PC-9 (cell line): ENCODE measurements at regions of chr13 and their contacts with region 1.

Region 1: GRCh38 chr13:52450012-52450792 is at the start of gene VPS36:
- DNase-seq: peak; percentile 76 to 96
- H3K4me3 ChIP-seq: peak within 1 kb of the TSS; percentile 65
- H3K27ac ChIP-seq: peak within 1 kb of the TSS; percentile 58
- H3K4me1 ChIP-seq: peaks cover 52% of the 10 kb centered on the region
- H3K27me3 ChIP-seq: no peaks in the 10 kb centered on the region
- CTCF ChIP-seq: peak; percentile 95
- total RNA-seq, gene VPS36: 28.1 and 31.6 TPM in 2 replicates

Region 2: GRCh38 chr13:51729866-51730546 is 720.2 kb before region 1 on chr13:
- CTCF ChIA-PET with region 1: no interaction called
- POLR2A ChIA-PET with region 1: no interaction called
- intact Hi-C with region 1: no loop called
- DNase-seq: peak in 1 of 2 experiments; percentile 49
- H3K4me3 ChIP-seq: no peak overlapping the region
- H3K27ac ChIP-seq: no peak overlapping the region
- H3K4me1 ChIP-seq: peaks cover 15% of the 10 kb centered on the region
- H3K27me3 ChIP-seq: no peaks in the 10 kb centered on the region
- CTCF ChIP-seq: no peak

Region 3: GRCh38 chr13:51814825-51815650 is 635.2 kb before region 1 on chr13:
- CTCF ChIA-PET with region 1: interaction called, 5 read pairs
- POLR2A ChIA-PET with region 1: no interaction called
- intact Hi-C with region 1: loop called (anchors 5 kb)
- DNase-seq: peak; percentile 55 to 66
- H3K4me3 ChIP-seq: peak overlapping the region; percentile 7; the same call in 1 of the 2 replicates
- H3K27ac ChIP-seq: no peak overlapping the region
- H3K4me1 ChIP-seq: peaks cover 10% of the 10 kb centered on the region; the same call in 1 of the 2 replicates
- H3K27me3 ChIP-seq: peaks cover 36% of the 10 kb centered on the region; the same call in 1 of the 2 replicates
- CTCF ChIP-seq: peak; percentile 85

Region 4: GRCh38 chr13:51895906-51896888 is 554.0 kb before region 1 on chr13:
- CTCF ChIA-PET with region 1: no interaction called
- POLR2A ChIA-PET with region 1: no interaction called
- intact Hi-C with region 1: loop called (anchors 5 kb)
- DNase-seq: peak; percentile 24 to 39
- H3K4me3 ChIP-seq: no peak overlapping the region
- H3K27ac ChIP-seq: no peak overlapping the region
- H3K4me1 ChIP-seq: no peaks in the 10 kb centered on the region
- H3K27me3 ChIP-seq: peaks cover 36% of the 10 kb centered on the region
- CTCF ChIP-seq: peak; percentile 73

Region 5: DNA sequence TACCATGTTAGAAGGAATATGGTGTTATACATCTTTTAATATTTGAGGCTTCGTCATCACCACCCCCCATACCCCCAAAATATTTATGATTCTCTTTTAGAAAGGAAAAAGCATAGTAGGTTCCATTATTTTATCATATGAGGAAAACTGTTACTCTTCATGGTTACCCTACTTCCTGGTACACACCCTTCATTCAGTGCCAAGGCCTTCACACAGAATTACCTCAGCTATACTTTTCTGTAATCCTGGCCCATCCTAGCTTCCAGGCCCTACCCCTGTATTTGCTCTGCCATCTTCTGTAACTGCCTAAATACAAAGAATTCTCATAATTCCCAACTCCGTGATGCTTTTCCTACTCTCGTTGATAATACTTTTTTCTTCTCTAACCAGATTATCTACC is 430.0 kb before region 1 on chr13:
- CTCF ChIA-PET with region 1: no interaction called
- POLR2A ChIA-PET with region 1: no interaction called
- intact Hi-C with region 1: no loop called
- DNase-seq: no peak
- H3K4me3 ChIP-seq: no peak overlapping the region
- H3K27ac ChIP-seq: no peak overlapping the region
- H3K4me1 ChIP-seq: no peaks in the 10 kb centered on the region
- H3K27me3 ChIP-seq: no peaks in the 10 kb centered on the region
- CTCF ChIP-seq: no peak

Region 6: GRCh38 chr13:52070929-52071523 is 379.2 kb before region 1 on chr13:
- CTCF ChIA-PET with region 1: no interaction called
- POLR2A ChIA-PET with region 1: no interaction called
- intact Hi-C with region 1: loop called (anchors 2 kb)
- DNase-seq: no peak
- H3K4me3 ChIP-seq: no peak overlapping the region
- H3K27ac ChIP-seq: no peak overlapping the region
- H3K4me1 ChIP-seq: 0 out of 2 replicates have a peak, but pooled peaks cover 4% of the 10 kb centered on the region
- H3K27me3 ChIP-seq: no peaks in the 10 kb centered on the region
- CTCF ChIP-seq: peak; percentile 46; the same call in 1 of the 2 replicates

Region 7: DNA sequence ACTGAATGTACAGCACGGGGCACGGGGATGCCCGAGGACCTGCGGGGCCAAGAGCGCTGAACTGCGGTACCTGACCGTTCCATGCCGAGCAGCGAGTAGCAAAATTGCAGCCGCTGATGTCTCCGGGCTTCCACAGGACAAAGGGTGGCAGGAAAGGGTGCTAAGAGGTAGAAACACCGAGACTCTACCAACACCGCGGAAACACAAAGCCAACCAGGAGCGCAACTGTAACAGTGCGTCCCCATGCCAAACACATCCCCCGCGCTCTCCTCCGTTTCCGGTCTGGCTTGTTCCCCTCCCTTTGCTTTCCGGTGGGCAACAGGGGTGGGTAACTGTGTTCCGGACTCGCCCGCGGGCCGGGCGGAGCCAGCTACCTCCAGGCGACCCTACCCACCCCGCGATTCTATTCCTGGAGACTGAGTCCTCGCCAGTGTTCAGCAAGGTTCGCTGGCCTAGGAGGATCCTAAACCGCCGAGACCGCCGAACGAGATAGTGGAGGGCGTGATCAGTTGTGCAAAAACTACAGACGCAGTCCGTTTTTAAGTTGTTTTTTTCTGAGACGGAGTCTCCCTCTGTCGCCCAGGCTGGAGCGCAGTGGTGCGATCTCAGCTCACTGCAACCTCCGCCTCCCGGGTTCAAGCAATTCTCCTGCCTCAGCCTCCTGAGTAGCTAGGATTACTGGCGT is 255.9 kb before region 1 on chr13:
- CTCF ChIA-PET with region 1: interaction called, 4 read pairs
- POLR2A ChIA-PET with region 1: no interaction called
- intact Hi-C with region 1: loop called (anchors 2 kb)
- DNase-seq: peak; percentile 68 to 84
- H3K4me3 ChIP-seq: peak overlapping the region; percentile 92
- H3K27ac ChIP-seq: peak overlapping the region; percentile 35
- H3K4me1 ChIP-seq: peaks cover 13% of the 10 kb centered on the region
- H3K27me3 ChIP-seq: no peaks in the 10 kb centered on the region
- CTCF ChIP-seq: no peak

Region 8: GRCh38 chr13:52383366-52383765 is 66.8 kb before region 1 on chr13:
- CTCF ChIA-PET with region 1: no interaction called
- POLR2A ChIA-PET with region 1: no interaction called
- intact Hi-C with region 1: no loop called
- DNase-seq: no peak
- H3K4me3 ChIP-seq: no peak overlapping the region
- H3K27ac ChIP-seq: no peak overlapping the region
- H3K4me1 ChIP-seq: peaks cover 9% of the 10 kb centered on the region; the same call in 1 of the 2 replicates
- H3K27me3 ChIP-seq: no peaks in the 10 kb centered on the region
- CTCF ChIP-seq: no peak

Region 9: DNA sequence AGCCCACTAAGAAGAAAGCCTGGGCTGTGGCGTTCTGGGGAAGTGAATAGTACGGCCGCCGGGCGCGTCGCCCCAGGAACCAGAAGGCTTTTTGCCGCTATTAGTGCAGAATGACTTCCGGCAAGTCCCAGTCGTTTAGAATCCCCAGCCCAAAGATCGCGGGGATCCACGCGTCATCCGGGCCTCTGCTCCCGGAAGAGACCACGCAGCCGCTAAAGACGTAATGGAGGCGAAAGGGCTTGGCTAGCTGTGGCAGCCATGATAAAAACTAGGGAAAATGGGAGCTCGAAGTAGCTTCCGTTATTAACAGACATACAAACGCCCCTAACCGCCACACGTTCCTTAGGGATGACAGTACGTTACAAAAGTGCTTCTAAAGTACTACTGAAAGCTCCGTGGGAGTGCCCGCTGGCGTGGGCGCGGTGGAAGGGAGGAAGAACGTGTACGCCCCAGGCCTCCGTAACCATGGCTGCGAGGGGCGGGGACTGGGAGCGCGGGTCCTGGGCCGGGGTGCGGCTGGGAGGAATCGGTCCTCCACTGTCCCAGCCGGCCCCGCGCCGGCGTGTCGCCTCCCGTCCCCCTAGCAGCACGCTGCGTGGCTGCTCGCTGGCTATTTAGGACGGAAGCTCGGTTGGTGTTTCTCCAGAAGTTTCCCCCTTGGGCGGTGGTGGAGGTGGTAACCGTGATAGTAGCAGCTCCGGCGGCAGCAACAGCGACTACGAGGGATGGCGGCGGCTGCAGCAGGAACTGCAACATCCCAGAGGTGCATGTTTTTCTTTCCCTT is 202.2 kb after region 1 on chr13 and contains the start of gene SUGT1:
- CTCF ChIA-PET with region 1: no interaction called
- POLR2A ChIA-PET with region 1: no interaction called
- intact Hi-C with region 1: loop called (anchors 10 kb)
- DNase-seq: peak; percentile 94 to 97
- H3K4me3 ChIP-seq: peak within 1 kb of the TSS; percentile 86
- H3K27ac ChIP-seq: peak within 1 kb of the TSS; percentile 93
- H3K4me1 ChIP-seq: peaks cover 23% of the 10 kb centered on the region
- H3K27me3 ChIP-seq: no peaks in the 10 kb centered on the region
- CTCF ChIP-seq: no peak; the same call in 1 of the 2 replicates
- total RNA-seq, gene SUGT1: 48.8 and 57.2 TPM in 2 replicates